Gastrocnemius medialis (tissue), 4 donors: ENCODE measurements at regions of chr15 and their contacts with region 1.

Region 1: GRCh38 chr15:84818261-84819131 is 1.3 kb downstream of the ALPK3 start:
- DNase-seq: peak; percentile 88 to 89
- ATAC-seq: peak; percentile 75 to 79
- H3K4me3 ChIP-seq: peak overlapping the region; percentile 71 to 97 (median 82)
- H3K27ac ChIP-seq: peak overlapping the region; percentile 94 to 99 (median 96)
- H3K4me1 ChIP-seq: peaks cover 46 to 64% of the 10 kb centered on the region in 2 donors
- H3K27me3 ChIP-seq: no peaks in the 10 kb centered on the region
- CTCF ChIP-seq: peak in 2 of 5 experiments; percentile 19 to 20
- POLR2A ChIP-seq: peak; percentile 82 to 90

Region 2: DNA sequence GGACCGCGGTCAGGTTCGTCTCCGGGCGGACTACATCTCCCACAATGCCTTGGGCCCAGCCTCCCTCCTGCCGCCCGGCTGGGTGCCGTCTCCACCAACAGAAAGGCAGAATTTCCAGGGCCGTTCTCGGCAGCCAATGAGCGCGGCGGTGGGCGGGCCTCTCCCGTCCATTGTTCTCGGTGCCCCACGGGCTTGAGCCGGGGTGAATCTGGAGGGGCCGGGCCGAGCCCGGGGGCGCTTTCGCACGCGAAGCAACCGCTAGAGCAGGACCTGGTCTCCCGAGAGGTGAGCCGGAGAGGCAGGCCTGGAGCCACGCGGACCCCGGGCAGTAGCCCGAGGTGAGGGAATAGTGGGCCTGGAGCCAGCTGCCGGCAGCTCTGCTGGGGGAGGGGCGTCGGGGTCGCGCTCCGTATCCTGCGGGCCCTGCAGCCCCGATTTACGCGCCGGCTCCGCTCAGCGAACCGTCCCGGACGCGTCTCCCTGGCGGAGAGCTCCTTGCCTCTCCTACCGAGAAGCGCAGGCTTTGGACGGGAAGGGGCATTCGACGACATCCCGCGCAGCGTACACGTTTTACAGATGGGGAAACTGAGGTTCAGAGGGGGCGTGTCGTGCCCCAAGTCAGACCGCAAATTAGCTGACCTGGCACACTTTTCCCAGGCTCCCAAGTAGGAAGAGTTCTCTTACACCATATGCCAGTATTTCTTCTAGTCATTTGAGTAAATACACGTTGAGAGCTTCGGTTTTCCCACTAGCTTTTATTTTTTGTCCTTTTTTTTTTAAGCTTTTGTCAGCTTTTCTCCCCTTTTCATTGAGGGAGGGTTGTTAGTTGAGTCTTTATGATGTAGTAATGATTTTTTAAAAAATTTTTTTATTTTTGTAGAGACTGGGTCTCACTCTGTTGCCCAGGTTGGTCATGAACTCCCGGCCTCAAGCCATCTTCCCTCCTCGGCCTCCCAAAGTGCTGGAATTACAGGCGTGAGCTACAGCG is 217.4 kb before region 1 on chr15 and contains the start of gene ZSCAN2:
- in situ Hi-C with region 1: no loop called
- intact Hi-C with region 1: loop called (anchors 10 kb)
- DNase-seq: peak; percentile 93 to 96
- ATAC-seq: peak; percentile 93 to 97
- H3K4me3 ChIP-seq: peak within 1 kb of the TSS; percentile 95 to 98 (median 96)
- H3K27ac ChIP-seq: peak within 1 kb of the TSS; percentile 82 to 88 (median 86)
- H3K4me1 ChIP-seq: peaks cover 6 to 9% of the 10 kb centered on the region in 2 donors
- H3K27me3 ChIP-seq: no peaks in the 10 kb centered on the region
- CTCF ChIP-seq: no peak
- POLR2A ChIP-seq: peak in 1 of 2 donors; percentile 13
- total RNA-seq, gene ZSCAN2: 6.1 to 10.3 (median 8.6) TPM

Region 3: GRCh38 chr15:84659904-84660781 is 158.4 kb before region 1 on chr15:
- in situ Hi-C with region 1: no loop called
- intact Hi-C with region 1: no loop called
- DNase-seq: no peak
- ATAC-seq: no peak
- H3K4me3 ChIP-seq: no peak overlapping the region
- H3K27ac ChIP-seq: no peak overlapping the region
- H3K4me1 ChIP-seq: peaks cover under 1 to 13% of the 10 kb centered on the region in 2 donors
- H3K27me3 ChIP-seq: no peaks in the 10 kb centered on the region
- CTCF ChIP-seq: no peak
- POLR2A ChIP-seq: no peak

Region 4: DNA sequence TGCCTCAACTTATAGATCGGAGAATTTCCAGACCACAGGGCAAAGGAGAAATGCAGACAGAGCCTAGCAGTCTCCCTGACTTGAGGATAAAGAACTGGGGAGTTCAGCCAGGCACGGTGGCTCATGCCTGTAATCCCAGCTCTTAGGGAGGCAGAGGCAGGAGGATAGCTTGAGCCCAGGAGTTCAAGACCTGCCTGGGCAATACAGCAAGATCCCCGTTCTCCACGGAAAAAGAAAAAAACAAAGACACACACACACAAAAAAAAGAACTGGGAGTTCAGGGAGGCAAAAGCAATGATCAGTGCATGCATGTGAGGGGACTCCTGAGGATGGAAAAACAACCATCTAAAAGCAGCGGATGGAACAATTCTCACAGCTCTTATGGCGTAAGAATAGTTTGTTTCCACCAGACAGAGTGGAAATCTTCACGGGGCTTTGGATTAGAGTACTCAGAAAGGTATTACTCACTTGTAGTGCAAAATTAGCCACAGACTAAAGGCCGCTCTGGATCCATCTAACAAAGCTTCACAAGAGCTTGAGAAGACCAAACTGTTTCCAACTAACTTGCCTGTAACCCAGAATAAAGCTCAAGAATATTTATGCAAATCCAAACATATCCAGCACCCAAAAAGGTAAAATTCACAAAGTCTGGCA is 118.8 kb before region 1 on chr15:
- in situ Hi-C with region 1: no loop called
- intact Hi-C with region 1: no loop called
- DNase-seq: no peak
- ATAC-seq: no peak
- H3K4me3 ChIP-seq: no peak overlapping the region
- H3K27ac ChIP-seq: no peak overlapping the region
- H3K4me1 ChIP-seq: peaks cover 17 to 24% of the 10 kb centered on the region in 2 donors
- H3K27me3 ChIP-seq: no peaks in the 10 kb centered on the region
- CTCF ChIP-seq: no peak
- POLR2A ChIP-seq: no peak

Region 5: GRCh38 chr15:84716036-84716799 is 102.3 kb before region 1 on chr15 and contains the start of gene SEC11A:
- in situ Hi-C with region 1: no loop called
- intact Hi-C with region 1: loop called (anchors 2 kb)
- DNase-seq: peak; percentile 95
- ATAC-seq: peak; percentile 95
- H3K4me3 ChIP-seq: peak within 1 kb of the TSS; percentile 87 to 94 (median 90)
- H3K27ac ChIP-seq: peak within 1 kb of the TSS; percentile 95 to 97 (median 96)
- H3K4me1 ChIP-seq: peaks cover 29 to 30% of the 10 kb centered on the region in 2 donors
- H3K27me3 ChIP-seq: no peaks in the 10 kb centered on the region
- CTCF ChIP-seq: no peak
- POLR2A ChIP-seq: peak; percentile 72 to 80
- total RNA-seq, gene SEC11A: 90.2 to 127 (median 118) TPM

Region 6: DNA sequence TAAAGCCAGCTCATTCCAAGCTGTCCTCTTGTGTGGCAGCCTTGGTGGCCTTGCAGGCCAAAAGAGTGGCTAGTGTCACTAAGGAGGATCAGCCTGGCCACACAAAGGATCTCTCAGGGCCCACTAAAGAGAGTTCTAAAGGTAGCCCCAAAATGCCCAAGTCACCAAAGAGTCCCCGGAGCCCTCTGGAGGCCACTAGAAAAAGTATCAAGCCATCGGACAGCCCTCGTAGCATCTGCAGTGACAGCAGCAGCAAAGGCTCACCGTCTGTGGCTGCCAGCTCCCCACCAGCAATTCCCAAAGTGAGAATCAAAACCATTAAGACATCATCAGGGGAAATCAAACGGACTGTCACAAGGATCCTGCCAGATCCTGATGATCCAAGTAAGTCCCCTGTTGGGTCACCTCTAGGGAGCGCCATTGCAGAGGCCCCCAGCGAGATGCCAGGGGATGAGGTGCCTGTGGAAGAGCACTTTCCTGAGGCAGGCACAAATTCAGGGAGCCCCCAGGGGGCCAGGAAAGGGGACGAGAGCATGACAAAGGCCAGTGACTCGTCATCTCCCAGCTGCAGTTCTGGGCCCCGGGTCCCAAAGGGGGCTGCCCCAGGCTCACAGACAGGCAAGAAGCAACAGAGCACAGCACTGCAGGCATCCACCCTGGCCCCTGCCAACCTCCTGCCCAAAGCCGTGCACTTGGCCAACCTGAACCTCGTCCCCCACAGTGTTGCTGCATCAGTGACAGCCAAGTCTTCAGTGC is 34.8 kb before region 1 on chr15:
- in situ Hi-C with region 1: no loop called
- intact Hi-C with region 1: loop called (anchors 2 kb)
- DNase-seq: no peak
- ATAC-seq: no peak
- H3K4me3 ChIP-seq: no peak overlapping the region
- H3K27ac ChIP-seq: peak overlapping the region; percentile 77 to 95 (median 82)
- H3K4me1 ChIP-seq: peaks cover 49 to 51% of the 10 kb centered on the region in 2 donors
- H3K27me3 ChIP-seq: no peaks in the 10 kb centered on the region
- CTCF ChIP-seq: no peak
- POLR2A ChIP-seq: no peak